Activated B cell treated with CpG ODN at 0.5 μM for 24 hours (primary cell): ENCODE measurements at regions of chr10 and their contacts with region 1.

Region 1: GRCh38 chr10:95755511-95756004 is 405 bp upstream of the ENTPD1 start:
- DNase-seq: no peak
- ATAC-seq: no peak
- H3K4me3 Mint-ChIP-seq: peak overlapping the region; percentile 94
- H3K27ac Mint-ChIP-seq: peak overlapping the region; percentile 95
- H3K4me1 Mint-ChIP-seq: peaks cover 61% of the 10 kb centered on the region
- H3K27me3 Mint-ChIP-seq: no peaks in the 10 kb centered on the region
- CTCF ChIP-seq: no peak

Region 2: GRCh38 chr10:95741807-95742467 is 13.6 kb before region 1 on chr10:
- CTCF ChIA-PET with region 1: interaction called, 8 read pairs
- POLR2A ChIA-PET with region 1: interaction called, 189 read pairs
- intact Hi-C with region 1: loop called (anchors 1 kb)
- DNase-seq: no peak
- ATAC-seq: peak; percentile 83
- H3K4me3 Mint-ChIP-seq: peak overlapping the region; percentile 85
- H3K27ac Mint-ChIP-seq: peak overlapping the region; percentile 99
- H3K4me1 Mint-ChIP-seq: peaks cover 55% of the 10 kb centered on the region
- H3K27me3 Mint-ChIP-seq: no peaks in the 10 kb centered on the region
- CTCF ChIP-seq: no peak

Region 3: GRCh38 chr10:95783741-95784140 is 28.2 kb after region 1 on chr10:
- CTCF ChIA-PET with region 1: interaction called, 15 read pairs
- POLR2A ChIA-PET with region 1: interaction called, 287 read pairs
- intact Hi-C with region 1: loop called (anchors 1 kb)
- DNase-seq: no peak
- ATAC-seq: peak; percentile 55
- H3K4me3 Mint-ChIP-seq: peak overlapping the region; percentile 53
- H3K27ac Mint-ChIP-seq: peak overlapping the region; percentile 99
- H3K4me1 Mint-ChIP-seq: peaks cover 95% of the 10 kb centered on the region
- H3K27me3 Mint-ChIP-seq: no peaks in the 10 kb centered on the region
- CTCF ChIP-seq: no peak

Region 4: DNA sequence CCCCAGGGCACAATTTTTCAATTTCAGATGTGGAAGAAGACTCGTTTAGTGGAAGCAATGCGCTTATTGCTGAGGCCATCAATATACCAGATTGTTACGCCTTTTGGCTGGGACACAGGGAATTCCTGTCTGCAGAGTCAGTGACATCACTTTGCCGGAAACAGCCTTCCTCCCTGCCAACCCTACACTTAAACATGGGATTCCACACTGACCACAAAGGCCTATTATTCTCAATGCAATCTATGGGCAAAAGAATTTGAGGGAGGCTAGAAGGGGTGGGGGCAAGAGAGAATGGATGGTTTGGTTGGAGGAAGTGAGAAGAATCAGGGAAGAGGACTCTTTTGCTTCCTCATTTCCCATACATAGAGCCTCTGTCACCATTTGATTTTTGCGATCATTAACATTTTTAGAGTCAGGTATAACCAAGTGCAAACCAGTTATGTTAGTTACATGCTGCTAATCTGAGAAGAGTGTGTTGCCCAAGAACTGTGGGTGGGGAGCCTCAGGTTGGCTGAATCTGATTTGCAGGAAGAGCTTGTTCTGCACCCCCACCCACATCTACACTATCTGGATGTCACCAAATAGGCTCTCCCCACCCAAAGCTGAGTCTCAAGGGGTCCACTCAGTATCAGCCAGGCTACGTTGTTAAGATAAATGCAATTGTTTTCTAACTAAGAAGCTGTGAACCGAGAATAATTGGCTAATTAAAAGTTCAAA is 58.6 kb after region 1 on chr10:
- CTCF ChIA-PET with region 1: no interaction called
- POLR2A ChIA-PET with region 1: interaction called, 120 read pairs
- intact Hi-C with region 1: no loop called
- DNase-seq: no peak
- ATAC-seq: no peak
- H3K4me3 Mint-ChIP-seq: peak overlapping the region; percentile 37
- H3K27ac Mint-ChIP-seq: peak overlapping the region; percentile 67
- H3K4me1 Mint-ChIP-seq: peaks cover 79% of the 10 kb centered on the region
- H3K27me3 Mint-ChIP-seq: no peaks in the 10 kb centered on the region
- CTCF ChIP-seq: no peak

Region 5: GRCh38 chr10:95832216-95833041 is 76.9 kb after region 1 on chr10:
- CTCF ChIA-PET with region 1: interaction called, 26 read pairs
- POLR2A ChIA-PET with region 1: interaction called, 572 read pairs
- intact Hi-C with region 1: loop called (anchors 1 kb)
- DNase-seq: peak; percentile 52
- ATAC-seq: peak; percentile 88
- H3K4me3 Mint-ChIP-seq: peak overlapping the region; percentile 82
- H3K27ac Mint-ChIP-seq: peak overlapping the region; percentile 95
- H3K4me1 Mint-ChIP-seq: peaks cover 91% of the 10 kb centered on the region
- H3K27me3 Mint-ChIP-seq: no peaks in the 10 kb centered on the region
- CTCF ChIP-seq: no peak

Region 6: GRCh38 chr10:95864906-95865813 is 109.6 kb after region 1 on chr10:
- CTCF ChIA-PET with region 1: interaction called, 9 read pairs
- POLR2A ChIA-PET with region 1: interaction called, 16 read pairs
- intact Hi-C with region 1: loop called (anchors 1 kb)
- DNase-seq: no peak
- ATAC-seq: peak; percentile 98
- H3K4me3 Mint-ChIP-seq: no peak overlapping the region
- H3K27ac Mint-ChIP-seq: peak overlapping the region; percentile 89
- H3K4me1 Mint-ChIP-seq: peaks cover 25% of the 10 kb centered on the region
- H3K27me3 Mint-ChIP-seq: no peaks in the 10 kb centered on the region
- CTCF ChIP-seq: no peak

Region 7: DNA sequence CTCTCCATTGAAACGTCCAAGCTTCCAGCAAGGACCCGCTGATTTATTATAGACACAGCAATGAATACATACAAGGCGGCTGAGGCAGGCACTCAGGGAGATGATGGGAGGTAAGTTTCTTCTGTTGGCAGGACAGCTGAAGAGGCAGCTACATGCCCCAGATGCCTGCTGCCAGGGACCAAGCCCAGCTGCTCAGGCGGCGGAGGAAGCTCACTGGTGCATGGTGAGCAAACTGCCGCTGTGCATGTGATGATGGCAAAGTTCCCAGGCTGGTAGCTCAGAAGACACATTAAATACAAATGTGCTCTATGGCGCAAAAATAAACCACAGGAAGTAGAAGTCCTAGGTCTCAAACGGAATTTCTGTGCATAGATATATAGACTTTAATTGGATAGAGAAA is 551.0 kb after region 1 on chr10:
- CTCF ChIA-PET with region 1: no interaction called
- POLR2A ChIA-PET with region 1: interaction called, 16 read pairs
- intact Hi-C with region 1: no loop called
- DNase-seq: peak; percentile 32
- ATAC-seq: peak; percentile 90
- H3K4me3 Mint-ChIP-seq: peak overlapping the region; percentile 24
- H3K27ac Mint-ChIP-seq: no peak overlapping the region
- H3K4me1 Mint-ChIP-seq: peaks cover 27% of the 10 kb centered on the region
- H3K27me3 Mint-ChIP-seq: peaks cover 26% of the 10 kb centered on the region
- CTCF ChIP-seq: no peak